WTC11 (cell line): ENCODE measurements at regions of chr1 and their contacts with region 1.

Region 1: DNA sequence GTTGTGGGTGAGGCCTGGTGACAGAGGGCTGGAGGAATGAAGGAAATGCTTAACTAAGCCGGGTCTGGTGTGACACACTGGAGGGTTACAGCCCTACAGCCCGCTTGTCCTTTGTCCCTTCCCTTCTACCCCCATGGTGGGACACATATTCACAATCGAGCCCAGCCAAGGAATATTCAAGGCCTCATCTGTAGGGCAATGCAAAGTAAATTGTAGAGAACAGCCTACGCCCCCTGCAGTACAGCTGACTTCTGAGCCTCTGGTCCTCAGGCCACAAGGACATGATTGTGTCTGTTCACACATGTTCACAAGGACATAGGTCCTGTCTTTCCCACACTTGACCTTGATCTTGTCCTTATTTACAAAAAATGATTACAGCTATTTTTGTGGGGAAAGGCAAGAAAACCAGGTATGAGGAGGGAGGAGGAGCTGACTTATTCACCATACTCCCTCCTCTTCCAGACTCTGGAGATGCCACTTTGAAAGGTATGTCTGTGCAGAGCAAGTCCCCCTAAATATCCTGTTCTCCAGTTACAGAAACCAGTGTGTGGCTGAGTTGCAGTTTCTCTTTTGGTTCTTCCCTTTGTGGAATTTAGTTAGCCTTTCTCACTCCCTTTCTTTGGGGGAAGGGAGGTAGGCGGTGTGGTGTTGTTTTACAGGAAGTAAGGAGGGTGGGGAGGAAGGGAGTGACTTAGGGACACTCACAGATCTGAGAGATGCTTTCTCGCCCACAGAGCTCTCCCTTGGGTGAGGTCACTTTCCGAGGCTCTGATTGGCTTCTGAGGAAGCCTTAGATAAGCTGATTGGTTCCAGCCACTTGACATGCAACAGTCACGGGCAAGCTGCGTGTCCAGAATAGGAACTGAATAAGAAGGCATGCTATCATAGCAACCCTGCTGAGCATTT is 14.6 kb downstream of the POLR3GL start:
- DNase-seq: peak; percentile 80
- ATAC-seq: peak; percentile 93
- H3K4me3 Mint-ChIP-seq: no peak overlapping the region
- H3K27ac Mint-ChIP-seq: no peak overlapping the region
- H3K4me1 Mint-ChIP-seq: peaks cover 18% of the 10 kb centered on the region
- H3K27me3 Mint-ChIP-seq: no peaks in the 10 kb centered on the region; the same call in 1 of the 2 replicates
- CTCF ChIP-seq: no peak

Region 2: GRCh38 chr1:145786271-145786670 is 192.8 kb before region 1 on chr1:
- CTCF ChIA-PET with region 1: no interaction called
- POLR2A ChIA-PET with region 1: no interaction called
- DNase-seq: no peak
- ATAC-seq: no peak
- H3K4me3 Mint-ChIP-seq: no peak overlapping the region
- H3K27ac Mint-ChIP-seq: no peak overlapping the region
- H3K4me1 Mint-ChIP-seq: peaks cover 6% of the 10 kb centered on the region; the same call in 1 of the 2 replicates
- H3K27me3 Mint-ChIP-seq: no peaks in the 10 kb centered on the region
- CTCF ChIP-seq: no peak

Region 3: GRCh38 chr1:145957443-145958319 is 21.4 kb before region 1 on chr1 and contains the start of gene LIX1L:
- CTCF ChIA-PET with region 1: interaction called, 51 read pairs
- POLR2A ChIA-PET with region 1: no interaction called
- DNase-seq: peak; percentile 96
- ATAC-seq: peak; percentile 86
- H3K4me3 Mint-ChIP-seq: peak within 1 kb of the TSS; percentile 70
- H3K27ac Mint-ChIP-seq: peak within 1 kb of the TSS; percentile 14; the same call in 1 of the 2 replicates
- H3K4me1 Mint-ChIP-seq: peaks cover 31% of the 10 kb centered on the region
- H3K27me3 Mint-ChIP-seq: peaks cover 92% of the 10 kb centered on the region
- CTCF ChIP-seq: no peak
- total RNA-seq, gene LIX1L: 3.0 to 3.8 TPM (median 3.8 TPM) in 3 replicates

Region 4: GRCh38 chr1:145990249-145991097 is 11.4 kb after region 1 on chr1:
- CTCF ChIA-PET with region 1: interaction called, 21 read pairs
- POLR2A ChIA-PET with region 1: interaction called, 5 read pairs
- DNase-seq: no peak
- ATAC-seq: no peak
- H3K4me3 Mint-ChIP-seq: no peak overlapping the region
- H3K27ac Mint-ChIP-seq: peak overlapping the region; percentile 83
- H3K4me1 Mint-ChIP-seq: peaks cover 55% of the 10 kb centered on the region
- H3K27me3 Mint-ChIP-seq: no peaks in the 10 kb centered on the region
- CTCF ChIP-seq: no peak

Region 5: GRCh38 chr1:146007506-146008133 is 28.5 kb after region 1 on chr1:
- CTCF ChIA-PET with region 1: interaction called, 52 read pairs
- POLR2A ChIA-PET with region 1: interaction called, 6 read pairs
- DNase-seq: no peak
- ATAC-seq: no peak
- H3K4me3 Mint-ChIP-seq: no peak overlapping the region
- H3K27ac Mint-ChIP-seq: no peak overlapping the region
- H3K4me1 Mint-ChIP-seq: no peaks in the 10 kb centered on the region
- H3K27me3 Mint-ChIP-seq: no peaks in the 10 kb centered on the region
- CTCF ChIP-seq: no peak; the same call in 1 of the 2 replicates

Region 6: GRCh38 chr1:146019231-146020057 is 40.3 kb after region 1 on chr1:
- CTCF ChIA-PET with region 1: interaction called, 12 read pairs
- POLR2A ChIA-PET with region 1: interaction called, 3 read pairs
- DNase-seq: peak; percentile 72
- ATAC-seq: peak; percentile 95
- H3K4me3 Mint-ChIP-seq: peak overlapping the region; percentile 68
- H3K27ac Mint-ChIP-seq: no peak overlapping the region
- H3K4me1 Mint-ChIP-seq: peaks cover 15% of the 10 kb centered on the region
- H3K27me3 Mint-ChIP-seq: peaks cover 69% of the 10 kb centered on the region
- CTCF ChIP-seq: no peak